ENCODE measurements at regions of chr9 and their contacts with region 1.

Region 1: GRCh38 chr9:20622330-20623020 is at the start of gene MLLT3:
- DNase-seq: peak; percentile 94
- H3K4me3 ChIP-seq: peak within 1 kb of the TSS; percentile 62
- H3K4me3 Mint-ChIP-seq: peak within 1 kb of the TSS; percentile 69
- H3K27ac Mint-ChIP-seq: peak within 1 kb of the TSS; percentile 76
- H3K4me1 ChIP-seq: peaks cover 9% of the 10 kb centered on the region; the same call in 1 of the 2 replicates
- H3K4me1 Mint-ChIP-seq: peaks cover 6% of the 10 kb centered on the region
- H3K27me3 ChIP-seq: no peaks in the 10 kb centered on the region
- H3K27me3 Mint-ChIP-seq: no peaks in the 10 kb centered on the region
- CTCF ChIP-seq: peak in 1 of 2 experiments; percentile 15
- total RNA-seq, gene MLLT3: 22.0 and 24.4 TPM in 2 replicates

Region 2: GRCh38 chr9:20356403-20357035 is 266.0 kb before region 1 on chr9:
- CTCF ChIA-PET with region 1: interaction called, 5 read pairs
- POLR2A ChIA-PET with region 1: no interaction called
- intact Hi-C with region 1: loop called (anchors 1 kb)
- DNase-seq: peak; percentile 65 to 71
- H3K4me3 ChIP-seq: no peak overlapping the region; the same call in 1 of the 2 replicates
- H3K4me3 Mint-ChIP-seq: peak overlapping the region; percentile 51
- H3K27ac Mint-ChIP-seq: peak overlapping the region; percentile 78
- H3K4me1 ChIP-seq: peaks cover 20% of the 10 kb centered on the region
- H3K4me1 Mint-ChIP-seq: peaks cover 11% of the 10 kb centered on the region
- H3K27me3 ChIP-seq: no peaks in the 10 kb centered on the region
- H3K27me3 Mint-ChIP-seq: no peaks in the 10 kb centered on the region
- CTCF ChIP-seq: peak; percentile 53 to 71

Region 3: DNA sequence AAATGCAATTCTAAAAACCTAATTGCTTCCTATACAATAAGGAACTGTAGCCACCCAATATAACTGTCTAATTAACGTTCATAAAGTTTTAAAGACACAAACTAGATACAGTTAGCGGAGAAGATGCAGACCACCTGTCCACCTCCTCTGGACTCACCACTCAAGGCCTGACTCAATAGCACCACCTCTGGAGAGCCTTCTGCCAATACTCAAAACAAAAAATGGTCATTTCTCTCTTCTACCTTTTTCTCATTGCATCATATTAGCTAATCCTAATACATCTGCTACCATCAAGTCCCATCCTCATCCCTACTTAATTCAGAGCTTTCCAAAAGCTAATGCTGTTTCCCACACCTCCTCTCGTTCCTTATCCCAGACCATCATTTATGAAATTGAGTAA is 160.1 kb before region 1 on chr9:
- CTCF ChIA-PET with region 1: no interaction called
- POLR2A ChIA-PET with region 1: no interaction called
- intact Hi-C with region 1: no loop called
- DNase-seq: no peak
- H3K4me3 ChIP-seq: no peak overlapping the region
- H3K4me3 Mint-ChIP-seq: no peak overlapping the region
- H3K27ac Mint-ChIP-seq: no peak overlapping the region
- H3K4me1 ChIP-seq: no peaks in the 10 kb centered on the region
- H3K4me1 Mint-ChIP-seq: peaks cover 7% of the 10 kb centered on the region
- H3K27me3 ChIP-seq: no peaks in the 10 kb centered on the region
- H3K27me3 Mint-ChIP-seq: no peaks in the 10 kb centered on the region
- CTCF ChIP-seq: no peak

Region 4: DNA sequence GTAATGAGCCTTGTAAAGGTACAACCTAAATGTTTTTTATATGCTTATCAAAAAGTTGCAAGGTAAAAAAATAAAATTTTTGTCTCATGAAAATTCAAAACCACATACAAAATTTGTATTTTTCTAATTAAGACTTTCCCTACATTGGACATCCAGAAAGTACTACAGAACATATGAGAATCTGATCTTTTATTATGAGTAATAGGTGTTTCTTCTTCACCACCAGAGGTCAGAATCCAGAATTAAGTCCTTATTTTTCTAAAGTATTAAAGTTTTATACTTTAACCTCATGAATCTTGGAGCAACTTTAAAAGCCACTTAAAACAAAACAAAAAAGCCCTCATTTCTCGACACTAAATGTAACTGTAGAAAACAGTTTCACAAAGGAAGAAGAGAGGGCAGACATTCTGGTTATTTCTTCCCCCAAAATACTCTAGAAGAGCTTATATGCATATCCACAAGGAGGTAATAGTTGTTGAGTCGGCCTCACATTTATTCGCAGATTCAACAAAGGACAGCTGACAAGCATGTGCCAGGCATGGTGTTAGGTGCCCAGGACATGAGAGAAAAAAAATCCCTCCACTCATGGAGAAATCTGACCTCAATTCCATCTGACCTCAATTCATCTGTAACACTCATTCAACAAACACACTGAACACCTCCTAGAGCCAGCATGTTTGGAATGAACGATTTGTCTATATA is 69.5 kb before region 1 on chr9:
- CTCF ChIA-PET with region 1: interaction called, 5 read pairs
- POLR2A ChIA-PET with region 1: interaction called, 3 read pairs
- intact Hi-C with region 1: loop called (anchors 1 kb)
- DNase-seq: no peak
- H3K4me3 ChIP-seq: no peak overlapping the region
- H3K4me3 Mint-ChIP-seq: no peak overlapping the region
- H3K27ac Mint-ChIP-seq: no peak overlapping the region
- H3K4me1 ChIP-seq: peaks cover 36% of the 10 kb centered on the region
- H3K4me1 Mint-ChIP-seq: peaks cover 41% of the 10 kb centered on the region
- H3K27me3 ChIP-seq: no peaks in the 10 kb centered on the region
- H3K27me3 Mint-ChIP-seq: no peaks in the 10 kb centered on the region
- CTCF ChIP-seq: peak in 1 of 2 experiments; percentile 2

Region 5: GRCh38 chr9:20781092-20781491 is 158.6 kb after region 1 on chr9:
- CTCF ChIA-PET with region 1: no interaction called
- POLR2A ChIA-PET with region 1: no interaction called
- intact Hi-C with region 1: loop called (anchors 5 kb)
- DNase-seq: peak in 1 of 2 experiments; percentile 18
- H3K4me3 ChIP-seq: no peak overlapping the region
- H3K4me3 Mint-ChIP-seq: no peak overlapping the region
- H3K27ac Mint-ChIP-seq: no peak overlapping the region
- H3K4me1 ChIP-seq: peaks cover 13% of the 10 kb centered on the region; the same call in 1 of the 2 replicates
- H3K4me1 Mint-ChIP-seq: peaks cover 12% of the 10 kb centered on the region
- H3K27me3 ChIP-seq: no peaks in the 10 kb centered on the region
- H3K27me3 Mint-ChIP-seq: no peaks in the 10 kb centered on the region
- CTCF ChIP-seq: no peak

Region 6: DNA sequence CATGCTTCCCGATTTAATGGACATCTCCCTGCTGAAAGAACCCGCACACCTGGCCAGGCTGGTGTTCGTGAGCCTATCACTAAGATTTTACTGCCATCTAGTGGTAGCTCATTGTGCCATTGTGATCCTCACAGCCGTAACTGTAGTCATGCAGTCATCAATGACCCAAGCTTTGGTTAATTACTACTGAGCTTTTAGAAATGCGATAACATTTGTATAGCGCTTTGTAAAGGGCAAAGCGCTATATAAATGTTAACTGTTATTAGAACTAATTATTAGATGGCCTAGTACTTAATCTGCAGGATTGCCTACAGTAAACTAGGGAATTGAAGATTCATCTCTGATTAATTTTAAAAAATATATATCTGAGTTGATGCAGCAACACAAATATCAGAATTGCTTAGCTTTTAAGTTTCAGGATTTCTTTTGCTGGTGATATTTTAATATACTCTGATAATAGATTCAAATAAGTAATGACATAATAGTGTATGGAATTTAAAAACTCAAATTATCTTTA is 318.8 kb after region 1 on chr9:
- CTCF ChIA-PET with region 1: interaction called, 32 read pairs
- POLR2A ChIA-PET with region 1: no interaction called
- intact Hi-C with region 1: loop called (anchors 1 kb)
- DNase-seq: peak; percentile 56 to 69
- H3K4me3 ChIP-seq: no peak overlapping the region
- H3K4me3 Mint-ChIP-seq: no peak overlapping the region
- H3K27ac Mint-ChIP-seq: no peak overlapping the region
- H3K4me1 ChIP-seq: 0 out of 2 replicates have a peak, but pooled peaks cover 4% of the 10 kb centered on the region
- H3K4me1 Mint-ChIP-seq: no peaks in the 10 kb centered on the region
- H3K27me3 ChIP-seq: no peaks in the 10 kb centered on the region
- H3K27me3 Mint-ChIP-seq: no peaks in the 10 kb centered on the region
- CTCF ChIP-seq: peak; percentile 55 to 71

Measured in Caco-2 (cell line).